Naive thymus-derived CD4-positive, alpha-beta T cell (primary cell): ENCODE measurements at regions of chr19 and their contacts with region 1.

Region 1: GRCh38 chr19:12974301-12975220 is 5.2 kb downstream of the DAND5 start:
- DNase-seq: no peak
- ATAC-seq: no peak
- H3K4me3 ChIP-seq: no peak overlapping the region
- H3K4me3 Mint-ChIP-seq: no peak overlapping the region
- H3K27ac ChIP-seq: no peak overlapping the region
- H3K27ac Mint-ChIP-seq: no peak overlapping the region
- H3K4me1 ChIP-seq: peaks cover 0 to 3% of the 10 kb centered on the region in 2 donors
- H3K4me1 Mint-ChIP-seq: peaks cover 2 to 7% (median 5%) of the 10 kb centered on the region in 7 donors
- H3K27me3 ChIP-seq: no peaks in the 10 kb centered on the region
- H3K27me3 Mint-ChIP-seq: peaks cover 7 to 17% (median 16%) of the 10 kb centered on the region in 5 donors

Region 2: GRCh38 chr19:12872941-12873890 is 101.3 kb before region 1 on chr19:
- CTCF ChIA-PET with region 1: no interaction called
- POLR2A ChIA-PET with region 1: no interaction called
- intact Hi-C with region 1: no loop called
- DNase-seq: peak in 8 of 9 donors; percentile 28 to 79 (median 52)
- ATAC-seq: peak; percentile 81
- H3K4me3 ChIP-seq: no peak overlapping the region
- H3K4me3 Mint-ChIP-seq: peak overlapping the region in 6 of 10 donors; percentile 35 to 70 (median 56)
- H3K27ac ChIP-seq: no peak overlapping the region
- H3K27ac Mint-ChIP-seq: peak overlapping the region in 4 of 9 donors; percentile 28 to 71 (median 62)
- H3K4me1 ChIP-seq: no peaks in the 10 kb centered on the region
- H3K4me1 Mint-ChIP-seq: peaks cover 0 to 9% (median 5%) of the 10 kb centered on the region in 7 donors
- H3K27me3 ChIP-seq: no peaks in the 10 kb centered on the region
- H3K27me3 Mint-ChIP-seq: peaks cover 0 to 3% (median 0%) of the 10 kb centered on the region in 5 donors

Region 3: DNA sequence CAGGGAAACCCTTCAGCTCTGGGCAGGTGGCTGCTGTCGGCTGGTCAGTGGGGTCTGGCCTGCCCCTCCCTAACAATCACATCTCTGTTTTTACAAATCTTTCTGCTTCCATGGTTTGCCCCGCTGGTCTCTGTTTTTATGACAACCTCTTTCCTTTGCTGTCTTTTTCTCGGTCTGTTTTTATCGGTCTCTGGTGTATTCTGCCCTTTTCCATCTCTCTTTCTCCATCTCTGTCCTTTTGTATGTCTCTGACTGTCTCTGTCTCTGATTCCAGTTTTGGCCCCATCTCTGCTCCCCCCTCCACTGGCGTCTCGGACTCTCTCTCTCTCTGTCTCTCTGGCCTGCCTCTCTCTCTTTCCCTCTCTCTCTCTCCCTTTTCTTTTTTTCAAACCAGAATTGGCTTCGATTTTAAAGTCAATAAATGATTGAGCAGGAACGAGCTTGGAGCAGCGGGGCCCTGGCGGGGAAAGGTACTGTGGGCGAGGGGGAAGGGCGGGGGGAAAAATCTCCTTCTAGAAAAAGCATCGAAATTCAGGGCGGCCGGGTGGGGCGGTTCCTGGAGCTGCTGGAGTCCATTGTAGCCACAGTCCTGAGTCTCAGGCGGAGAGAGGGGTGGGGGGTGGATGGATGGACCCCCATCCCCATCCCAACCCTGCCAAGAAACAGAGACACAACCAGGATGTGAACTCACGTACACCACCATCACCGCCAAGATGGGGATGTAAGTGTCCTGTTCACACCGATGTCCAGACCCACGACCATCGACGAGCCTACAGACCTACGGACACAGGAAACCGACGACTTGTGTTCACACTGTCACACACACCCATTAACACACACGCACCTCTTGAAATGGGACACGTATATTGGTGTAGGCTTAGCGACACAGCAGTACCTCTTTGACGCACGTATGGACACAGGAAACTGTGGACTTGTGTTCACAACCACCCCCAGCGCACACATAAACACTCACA is 23.7 kb after region 1 on chr19:
- CTCF ChIA-PET with region 1: no interaction called
- POLR2A ChIA-PET with region 1: no interaction called
- intact Hi-C with region 1: no loop called
- DNase-seq: no peak
- ATAC-seq: no peak
- H3K4me3 ChIP-seq: no peak overlapping the region
- H3K4me3 Mint-ChIP-seq: peak overlapping the region in 8 of 10 donors; percentile 37 to 85 (median 64)
- H3K27ac ChIP-seq: no peak overlapping the region
- H3K27ac Mint-ChIP-seq: peak overlapping the region in 5 of 9 donors; percentile 7 to 85 (median 45)
- H3K4me1 ChIP-seq: no peaks in the 10 kb centered on the region
- H3K4me1 Mint-ChIP-seq: peaks cover 6 to 22% (median 17%) of the 10 kb centered on the region in 7 donors
- H3K27me3 ChIP-seq: no peaks in the 10 kb centered on the region
- H3K27me3 Mint-ChIP-seq: peaks cover 0 to 37% (median 5%) of the 10 kb centered on the region in 5 donors

Region 4: DNA sequence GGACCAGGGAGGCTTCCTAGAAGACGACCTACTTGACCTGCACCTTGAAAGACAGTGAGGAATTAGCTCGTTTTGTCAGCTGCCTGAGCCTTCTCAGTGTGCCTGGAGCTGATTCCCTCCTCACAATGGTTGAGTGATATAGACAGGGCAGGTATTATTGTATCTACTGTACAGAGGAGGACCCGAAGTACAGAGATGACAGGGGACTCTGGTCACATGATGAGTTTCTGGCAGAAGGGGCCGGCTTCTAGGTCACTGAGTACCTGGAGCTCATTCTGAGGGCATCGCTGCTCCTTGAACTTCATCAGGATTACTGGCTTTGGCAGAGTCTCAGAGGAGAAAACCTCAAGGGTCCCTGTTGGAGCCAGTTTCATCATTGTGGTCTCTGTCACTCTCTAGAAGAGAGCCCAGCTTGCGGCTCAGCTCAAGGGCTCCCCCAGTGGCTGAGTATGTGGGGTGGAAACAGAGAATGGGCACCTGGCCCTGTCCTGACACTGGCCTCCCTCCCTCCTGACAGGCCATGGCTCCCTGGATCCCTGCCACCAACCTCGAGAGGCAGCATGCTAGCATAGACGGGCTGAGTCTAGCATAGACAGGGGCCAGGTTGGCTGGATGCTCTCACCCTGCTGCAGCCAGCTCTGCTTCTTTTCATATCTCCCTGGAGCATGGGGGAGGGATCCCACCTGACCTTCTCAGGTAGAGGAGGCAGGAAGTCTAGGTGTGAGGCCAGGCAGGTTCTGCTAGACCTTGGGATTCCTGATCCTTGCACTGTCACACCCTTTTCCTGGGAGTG is 59.5 kb after region 1 on chr19:
- CTCF ChIA-PET with region 1: interaction called, 4 read pairs
- POLR2A ChIA-PET with region 1: no interaction called
- intact Hi-C with region 1: loop called in 1 of 2 experiments (anchors 1 kb)
- DNase-seq: peak in 3 of 9 donors; percentile 13 to 40 (median 31)
- ATAC-seq: peak; percentile 81
- H3K4me3 ChIP-seq: no peak overlapping the region
- H3K4me3 Mint-ChIP-seq: no peak overlapping the region
- H3K27ac ChIP-seq: no peak overlapping the region
- H3K27ac Mint-ChIP-seq: no peak overlapping the region
- H3K4me1 ChIP-seq: no peaks in the 10 kb centered on the region
- H3K4me1 Mint-ChIP-seq: peaks cover 0 to 7% (median 0%) of the 10 kb centered on the region in 7 donors
- H3K27me3 ChIP-seq: no peaks in the 10 kb centered on the region
- H3K27me3 Mint-ChIP-seq: no peaks in the 10 kb centered on the region

Region 5: GRCh38 chr19:13588957-13589833 is 614.6 kb after region 1 on chr19:
- CTCF ChIA-PET with region 1: interaction called, 7 read pairs
- POLR2A ChIA-PET with region 1: no interaction called
- intact Hi-C with region 1: loop called in 1 of 2 experiments (anchors 5 kb)
- DNase-seq: peak; percentile 59 to 91 (median 82)
- ATAC-seq: peak; percentile 98
- H3K4me3 ChIP-seq: no peak overlapping the region
- H3K4me3 Mint-ChIP-seq: peak overlapping the region in 2 of 10 donors; percentile 26 to 27
- H3K27ac ChIP-seq: no peak overlapping the region
- H3K27ac Mint-ChIP-seq: no peak overlapping the region
- H3K4me1 ChIP-seq: peaks cover 0 to 4% of the 10 kb centered on the region in 2 donors
- H3K4me1 Mint-ChIP-seq: peaks cover 0 to 2% (median 0%) of the 10 kb centered on the region in 7 donors
- H3K27me3 ChIP-seq: peaks cover 0 to 4% of the 10 kb centered on the region in 2 donors
- H3K27me3 Mint-ChIP-seq: peaks cover 0 to 18% (median 10%) of the 10 kb centered on the region in 5 donors